Activated T-helper 1 cell treated with anti-CD3 and anti-CD28 coated beads, Interleukin-12 subunit alpha, Interleukin-12 subunit beta, Interleukin-2, Interleukin-4 antibody, amounts not matched to agents 30 ng/mL and 10 ng/mL and 1 ng/mL, durations not matched to agents 14 hours and 24 hours and 36 hours (primary cell): ENCODE measurements at regions of chr9 and their contacts with region 1.

Region 1: GRCh38 chr9:78011049-78011448 is 20.6 kb downstream of the GNAQ start:
- DNase-seq: no peak
- H3K4me3 Mint-ChIP-seq: no peak overlapping the region
- H3K27ac Mint-ChIP-seq: no peak overlapping the region
- H3K4me1 Mint-ChIP-seq: peaks cover 58% of the 10 kb centered on the region
- H3K27me3 Mint-ChIP-seq: no peaks in the 10 kb centered on the region

Region 2: DNA sequence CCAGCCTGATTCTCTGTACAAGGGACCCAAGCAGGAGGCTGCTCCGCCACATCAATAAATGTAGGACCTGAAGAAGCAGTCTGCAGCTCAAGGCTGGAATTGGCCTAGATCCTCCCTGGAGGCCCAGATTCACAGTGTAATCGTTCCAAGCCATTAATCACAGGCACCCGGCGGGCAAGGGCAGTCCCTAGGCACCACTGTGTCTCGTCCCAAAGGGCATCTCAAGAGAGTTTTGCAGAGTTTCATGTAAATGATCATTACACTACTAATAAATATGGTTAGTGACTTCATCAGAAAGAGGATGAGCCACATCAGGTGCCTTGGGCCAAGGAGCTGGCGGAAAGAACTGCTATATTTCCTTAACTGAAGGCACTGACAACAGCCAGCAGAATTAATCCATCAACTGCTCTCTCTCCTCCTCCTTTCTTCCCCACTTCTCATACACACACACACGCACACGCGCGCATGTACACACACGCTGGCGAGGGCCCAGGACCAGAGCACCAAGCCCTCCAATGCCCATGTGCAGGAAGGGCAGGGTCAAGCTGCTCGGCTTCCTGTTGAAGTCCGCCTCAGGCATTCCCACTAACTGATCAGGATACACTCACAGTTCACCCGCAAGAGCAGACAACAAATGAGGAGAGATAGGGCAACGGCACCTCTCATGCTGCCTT is 13.3 kb before region 1 on chr9:
- intact Hi-C with region 1: loop called (anchors 2 kb)
- DNase-seq: no peak
- H3K4me3 Mint-ChIP-seq: no peak overlapping the region
- H3K27ac Mint-ChIP-seq: no peak overlapping the region
- H3K4me1 Mint-ChIP-seq: peaks cover 23% of the 10 kb centered on the region
- H3K27me3 Mint-ChIP-seq: no peaks in the 10 kb centered on the region